Activated T-helper 2 cell treated with anti-CD3 and anti-CD28 coated beads, Interferon-gamma antibody, Interleukin-2, Interleukin-4, amounts not matched to agents 10 μg/mL and 5 μg/mL and 100 μg/mL, durations not matched to agents 14 hours and 24 hours and 36 hours (primary cell): ENCODE measurements at regions of chr9 and their contacts with region 1.

Region 1: DNA sequence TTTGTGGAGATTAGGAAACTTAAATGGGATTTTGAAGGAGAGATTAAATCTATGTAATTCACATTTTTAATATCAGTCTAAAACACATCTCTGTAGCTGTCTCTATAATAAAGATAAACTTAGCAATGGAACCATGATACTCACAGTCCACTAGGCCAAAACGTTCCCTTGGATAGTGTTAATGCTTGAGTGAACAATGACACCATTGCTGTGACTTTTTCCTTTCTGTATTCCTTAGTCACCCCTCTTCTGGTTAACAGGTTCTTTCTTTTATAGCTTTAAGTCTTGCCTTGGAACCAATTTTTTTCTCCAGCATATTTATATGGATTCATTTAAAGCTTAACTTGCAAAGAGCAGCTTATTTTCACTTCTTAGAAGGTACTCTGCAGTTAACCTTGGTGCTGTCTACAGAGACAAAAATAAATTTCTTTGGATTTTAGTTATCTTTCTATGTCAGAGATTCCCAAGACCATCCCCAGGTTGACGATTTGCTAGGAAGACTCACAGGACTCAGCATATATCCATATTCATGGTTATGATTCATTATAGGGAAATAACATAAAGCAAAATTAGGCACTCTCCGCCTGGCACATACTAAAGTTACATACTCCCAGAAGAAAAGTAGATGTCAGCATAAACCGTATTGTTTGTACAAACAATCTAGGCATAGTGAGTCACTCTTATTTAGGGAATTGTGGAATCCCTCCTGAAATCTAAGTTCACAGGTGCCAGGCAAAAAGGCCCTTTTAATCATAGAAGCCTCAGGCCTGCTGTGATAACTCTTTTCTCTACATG is 63.1 kb downstream of the INSL6 start:
- DNase-seq: no peak
- H3K4me3 Mint-ChIP-seq: no peak overlapping the region
- H3K27ac Mint-ChIP-seq: no peak overlapping the region
- H3K4me1 Mint-ChIP-seq: no peaks in the 10 kb centered on the region
- H3K27me3 Mint-ChIP-seq: no peaks in the 10 kb centered on the region

Region 2: GRCh38 chr9:5062631-5063030 is 59.7 kb before region 1 on chr9:
- intact Hi-C with region 1: loop called (anchors 10 kb)
- DNase-seq: no peak
- H3K4me3 Mint-ChIP-seq: no peak overlapping the region
- H3K27ac Mint-ChIP-seq: no peak overlapping the region
- H3K4me1 Mint-ChIP-seq: peaks cover 27% of the 10 kb centered on the region
- H3K27me3 Mint-ChIP-seq: no peaks in the 10 kb centered on the region